Gastrocnemius medialis (tissue), 4 donors: ENCODE measurements at regions of chr10 and their contacts with region 1.

Region 1: DNA sequence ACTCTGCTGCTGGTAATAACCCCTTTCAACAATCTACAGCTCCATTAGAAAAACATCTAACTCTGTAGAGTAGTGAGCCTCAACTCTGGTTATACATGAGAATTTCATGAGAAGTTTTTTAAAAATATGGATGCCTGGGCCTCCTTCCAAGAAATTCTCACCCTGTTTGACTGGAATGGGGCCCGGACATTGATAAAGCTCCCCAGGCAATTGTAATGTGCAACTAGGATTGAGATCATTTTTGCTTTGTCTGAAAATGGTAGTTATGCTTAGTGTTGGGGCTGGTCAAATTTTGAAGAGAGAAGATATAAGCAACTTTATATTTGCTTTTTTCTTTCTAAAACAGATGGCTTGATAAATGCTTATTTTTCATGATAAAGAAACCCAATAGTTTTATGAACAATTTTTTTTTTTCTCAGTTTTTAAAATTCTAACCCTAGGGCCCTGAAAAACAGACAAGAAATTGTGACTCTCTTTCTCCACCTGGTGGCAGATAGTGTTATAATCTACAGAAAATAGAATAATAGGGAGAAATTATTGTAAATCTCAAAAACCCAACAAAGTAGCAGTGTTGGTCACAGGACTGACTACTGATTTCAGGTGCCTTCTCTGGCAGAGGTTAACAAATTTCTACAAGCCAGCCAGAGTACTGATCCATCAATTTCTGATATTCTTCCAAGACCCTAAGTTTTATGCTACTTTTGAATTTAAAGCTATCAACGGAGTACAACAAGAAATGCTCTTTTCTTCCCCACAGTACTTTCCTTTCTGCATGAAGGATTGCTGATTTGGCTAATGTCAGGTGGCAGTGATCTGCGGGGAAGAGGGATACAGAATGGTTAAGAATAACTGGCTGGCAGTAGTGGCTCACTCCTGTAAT is 174.8 kb downstream of the DKK1 start:
- DNase-seq: no peak
- ATAC-seq: no peak
- H3K4me3 ChIP-seq: no peak overlapping the region
- H3K27ac ChIP-seq: no peak overlapping the region
- H3K4me1 ChIP-seq: no peaks in the 10 kb centered on the region
- H3K27me3 ChIP-seq: no peaks in the 10 kb centered on the region
- CTCF ChIP-seq: peak; percentile 26 to 50 (median 31)
- POLR2A ChIP-seq: no peak

Region 2: GRCh38 chr10:50988792-50989191 is 1500.1 kb before region 1 on chr10:
- in situ Hi-C with region 1: loop called in 1 of 4 experiments (anchors 25 kb)
- intact Hi-C with region 1: no loop called
- DNase-seq: no peak
- ATAC-seq: no peak
- H3K4me3 ChIP-seq: peak overlapping the region in 3 of 4 donors; percentile 20 to 77 (median 36)
- H3K27ac ChIP-seq: peak overlapping the region; percentile 96 to 99 (median 98)
- H3K4me1 ChIP-seq: peaks cover 11 to 17% of the 10 kb centered on the region in 2 donors
- H3K27me3 ChIP-seq: no peaks in the 10 kb centered on the region
- CTCF ChIP-seq: peak in 4 of 5 experiments; percentile 16 to 62 (median 52)
- POLR2A ChIP-seq: no peak

Region 3: GRCh38 chr10:51301644-51302043 is 1187.2 kb before region 1 on chr10:
- in situ Hi-C with region 1: no loop called
- intact Hi-C with region 1: no loop called
- DNase-seq: peak in 1 of 2 donors; percentile 14
- ATAC-seq: peak; percentile 83 to 90
- H3K4me3 ChIP-seq: no peak overlapping the region
- H3K27ac ChIP-seq: peak overlapping the region; percentile 39 to 55 (median 44)
- H3K4me1 ChIP-seq: peaks cover 22 to 33% of the 10 kb centered on the region in 2 donors
- H3K27me3 ChIP-seq: no peaks in the 10 kb centered on the region
- CTCF ChIP-seq: no peak
- POLR2A ChIP-seq: no peak

Region 4: DNA sequence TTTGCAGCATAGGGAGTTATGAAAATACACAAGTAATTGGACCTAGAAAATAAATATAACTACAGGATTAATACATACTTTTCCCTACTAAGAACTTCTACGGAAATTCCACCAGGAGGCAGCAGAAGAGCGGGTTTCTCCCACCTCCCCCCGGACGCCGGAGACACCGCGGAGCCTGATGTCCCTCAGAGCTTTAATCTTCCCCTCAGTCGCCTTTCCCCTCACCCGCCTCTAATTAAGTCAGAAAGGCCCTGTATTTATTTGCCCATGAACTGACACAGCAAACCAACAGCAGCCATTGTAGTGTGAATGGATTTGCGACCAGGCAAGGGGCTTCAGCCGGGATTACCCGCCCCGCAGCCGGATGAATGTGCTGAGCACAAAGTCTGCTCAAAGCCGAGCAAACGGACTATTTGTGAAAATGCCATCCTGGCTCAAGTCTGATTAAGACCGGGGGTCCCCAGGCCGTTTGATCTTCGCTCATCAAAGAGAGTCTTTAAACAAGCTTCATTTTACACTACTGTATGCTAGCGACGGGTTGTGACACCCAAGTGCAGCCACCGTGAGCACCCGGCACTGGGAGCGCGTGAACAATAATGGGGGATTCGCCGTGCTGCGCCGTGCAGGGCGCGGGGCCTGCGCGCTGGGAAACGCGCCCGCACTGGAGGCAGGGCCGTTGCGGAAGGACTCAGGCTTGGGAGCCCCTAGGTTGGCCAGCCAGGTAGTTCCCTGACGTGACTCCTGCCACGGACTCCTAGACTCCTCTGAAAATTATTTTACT is 180.4 kb before region 1 on chr10:
- in situ Hi-C with region 1: loop called (anchors 5 to 10 kb)
- intact Hi-C with region 1: loop called (anchors 2 kb)
- DNase-seq: peak; percentile 30 to 43
- ATAC-seq: peak; percentile 87 to 89
- H3K4me3 ChIP-seq: peak overlapping the region; percentile 49 to 72 (median 64)
- H3K27ac ChIP-seq: peak overlapping the region in 1 of 4 donors; percentile 40
- H3K4me1 ChIP-seq: peaks cover 5 to 10% of the 10 kb centered on the region in 2 donors
- H3K27me3 ChIP-seq: peaks cover 0 to 3% (median 0%) of the 10 kb centered on the region in 3 donors
- CTCF ChIP-seq: peak; percentile 35 to 75 (median 58)
- POLR2A ChIP-seq: no peak

Region 5: GRCh38 chr10:52313933-52314816 is 174.7 kb before region 1 on chr10 and contains the start of gene DKK1:
- in situ Hi-C with region 1: loop called (anchors 5 to 10 kb)
- intact Hi-C with region 1: loop called (anchors 2 kb)
- DNase-seq: peak; percentile 17 to 46
- ATAC-seq: peak; percentile 79 to 85
- H3K4me3 ChIP-seq: peak within 1 kb of the TSS; percentile 61 to 75 (median 68)
- H3K27ac ChIP-seq: no peak within 1 kb of the TSS
- H3K4me1 ChIP-seq: peaks cover 8 to 21% of the 10 kb centered on the region in 2 donors
- H3K27me3 ChIP-seq: peaks cover 0 to 7% (median 0%) of the 10 kb centered on the region in 3 donors
- CTCF ChIP-seq: peak; percentile 49 to 82 (median 70)
- POLR2A ChIP-seq: no peak
- total RNA-seq, gene DKK1: 0.78 TPM in 1 of 4 donors, not detected in the others